KBM-7 (cell line): ENCODE measurements at regions of chr19 and their contacts with region 1.

Region 1: DNA sequence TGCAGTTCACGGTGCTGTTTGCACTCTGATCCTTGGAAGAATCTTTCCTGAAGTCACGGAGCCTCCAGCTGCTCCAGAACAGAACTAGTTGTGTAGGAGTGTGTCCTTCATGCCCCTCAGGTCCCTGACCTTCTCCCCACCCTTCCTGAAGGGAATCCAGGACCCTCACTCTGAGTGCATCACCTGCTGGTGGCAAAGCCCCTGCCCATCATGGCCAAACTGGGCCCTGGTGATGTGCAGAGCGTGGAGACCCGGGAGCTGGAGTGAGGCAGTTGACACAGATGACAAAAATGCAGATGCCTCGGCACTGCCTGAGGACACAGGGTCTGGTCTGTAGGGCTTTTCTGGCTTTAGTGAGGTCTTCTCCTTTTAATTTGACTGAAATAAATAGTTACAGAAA is 15.9 kb upstream of the ZNF816 start:
- DNase-seq: no peak

Region 2: GRCh38 chr19:53333463-53334449 is 355.2 kb after region 1 on chr19 and contains the start of gene ZNF845:
- in situ Hi-C with region 1: loop called (anchors 5 kb)
- DNase-seq: peak; percentile 93